Activated CD4-positive, alpha-beta memory T cell treated with anti-CD3 and anti-CD28 coated beads for 36 hours (primary cell): ENCODE measurements at regions of chr5 and their contacts with region 1.

Region 1: GRCh38 chr5:175657593-175658271 is at the start of gene HRH2:
- DNase-seq: peak; percentile 72
- H3K4me3 Mint-ChIP-seq: peak within 1 kb of the TSS; percentile 87
- H3K27ac Mint-ChIP-seq: peak within 1 kb of the TSS; percentile 75
- H3K4me1 Mint-ChIP-seq: peaks cover 77% of the 10 kb centered on the region
- H3K27me3 Mint-ChIP-seq: no peaks in the 10 kb centered on the region
- total RNA-seq, gene HRH2: 11.6 to 11.8 TPM

Region 2: DNA sequence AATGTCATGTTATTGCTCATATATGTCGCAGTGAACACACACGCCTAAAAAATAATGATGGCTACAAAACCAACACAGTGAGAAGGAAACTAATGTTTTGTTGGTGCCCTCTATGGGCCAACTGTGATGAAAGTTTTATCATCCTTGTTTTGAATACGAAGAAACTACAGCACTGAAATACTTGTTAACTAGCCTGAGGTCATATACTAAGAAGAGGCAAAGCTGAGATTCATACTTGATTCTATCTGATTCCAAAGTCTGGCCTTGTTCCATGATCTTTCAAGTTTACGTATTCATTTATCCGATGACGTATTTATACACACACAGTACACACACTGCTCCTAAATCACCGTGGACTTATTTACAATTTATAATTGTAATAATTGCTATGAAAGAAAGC is 197.6 kb before region 1 on chr5:
- CTCF ChIA-PET with region 1: no interaction called
- POLR2A ChIA-PET with region 1: no interaction called
- intact Hi-C with region 1: no loop called
- DNase-seq: no peak
- H3K4me3 Mint-ChIP-seq: no peak overlapping the region
- H3K27ac Mint-ChIP-seq: no peak overlapping the region
- H3K4me1 Mint-ChIP-seq: peaks cover 14% of the 10 kb centered on the region
- H3K27me3 Mint-ChIP-seq: peaks cover 3% of the 10 kb centered on the region

Region 3: DNA sequence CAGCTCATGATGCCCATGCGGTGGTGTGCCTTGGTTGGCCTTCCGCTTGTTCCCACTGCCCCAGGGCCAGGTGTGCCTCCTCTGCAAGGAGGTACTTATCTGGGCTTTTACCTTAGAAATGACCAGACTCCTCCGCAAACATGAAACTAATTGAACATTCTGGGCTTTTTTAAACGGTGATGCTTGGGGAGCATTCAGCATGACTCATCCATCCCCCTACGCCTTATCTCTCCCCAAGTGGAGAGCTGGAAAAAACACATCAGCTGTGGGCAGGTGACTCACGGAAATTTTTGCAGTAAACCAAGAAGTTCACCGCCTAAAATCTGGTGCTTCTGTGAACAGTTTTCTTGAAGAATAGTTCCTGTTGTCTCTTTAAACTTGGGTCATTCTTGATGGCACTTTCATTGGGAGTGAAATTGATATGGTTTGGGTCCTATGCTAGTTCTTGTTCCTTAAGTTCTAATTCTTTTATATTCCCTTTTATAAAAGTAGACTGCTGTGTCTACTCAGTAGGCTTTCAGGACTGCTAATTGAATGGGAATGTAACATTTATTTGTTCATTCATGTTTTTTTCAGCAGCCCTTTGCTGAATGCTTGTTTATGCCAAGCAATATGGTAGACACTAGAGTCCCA is 139.8 kb before region 1 on chr5:
- CTCF ChIA-PET with region 1: interaction called, 4 read pairs
- POLR2A ChIA-PET with region 1: interaction called, 5 read pairs
- intact Hi-C with region 1: loop called (anchors 1 kb)
- DNase-seq: peak; percentile 95
- H3K4me3 Mint-ChIP-seq: peak overlapping the region; percentile 53
- H3K27ac Mint-ChIP-seq: peak overlapping the region; percentile 100
- H3K4me1 Mint-ChIP-seq: peaks cover 92% of the 10 kb centered on the region
- H3K27me3 Mint-ChIP-seq: no peaks in the 10 kb centered on the region

Region 4: GRCh38 chr5:175609526-175609925 is 48.2 kb before region 1 on chr5:
- CTCF ChIA-PET with region 1: interaction called, 3 read pairs
- POLR2A ChIA-PET with region 1: no interaction called
- intact Hi-C with region 1: loop called (anchors 2 kb)
- DNase-seq: peak; percentile 60
- H3K4me3 Mint-ChIP-seq: no peak overlapping the region
- H3K27ac Mint-ChIP-seq: no peak overlapping the region
- H3K4me1 Mint-ChIP-seq: peaks cover 15% of the 10 kb centered on the region
- H3K27me3 Mint-ChIP-seq: peaks cover 7% of the 10 kb centered on the region

Region 5: DNA sequence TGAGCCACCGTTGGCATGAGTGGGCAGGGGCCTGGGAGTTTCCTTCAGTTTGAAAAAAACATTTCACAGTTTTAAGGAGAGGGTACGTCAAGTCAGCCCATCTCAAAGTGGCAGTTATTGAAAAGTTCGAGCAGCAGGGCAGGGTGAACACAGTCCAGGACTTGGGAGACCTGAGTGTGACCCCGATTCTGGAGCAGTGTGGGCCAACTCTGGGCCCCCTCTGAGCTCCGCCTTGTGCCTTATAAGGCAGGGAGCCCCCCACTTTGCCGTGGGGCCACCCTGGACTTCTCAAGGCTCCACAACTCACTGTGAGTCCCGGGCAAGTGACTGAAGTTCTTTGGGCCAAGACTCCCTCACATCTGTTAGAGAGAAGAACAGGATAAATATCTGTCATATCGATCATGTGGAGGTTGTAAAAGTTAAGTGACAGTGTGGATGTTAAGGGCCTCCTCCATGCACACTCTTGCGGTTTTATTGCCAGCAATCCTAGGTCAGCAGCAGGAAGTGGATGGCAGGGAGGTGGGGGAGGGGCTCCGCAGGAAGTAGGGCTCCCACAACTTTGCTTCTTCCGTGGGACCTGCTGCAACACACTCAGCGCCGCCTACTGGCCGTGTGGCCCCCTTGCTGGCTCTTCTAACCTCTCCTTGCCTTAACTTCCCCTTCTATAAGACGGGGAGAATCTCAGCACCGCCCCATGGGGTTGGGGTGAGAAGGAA is 38.6 kb after region 1 on chr5:
- CTCF ChIA-PET with region 1: interaction called, 9 read pairs
- POLR2A ChIA-PET with region 1: no interaction called
- intact Hi-C with region 1: loop called (anchors 1 kb)
- DNase-seq: peak; percentile 92
- H3K4me3 Mint-ChIP-seq: peak overlapping the region; percentile 60
- H3K27ac Mint-ChIP-seq: peak overlapping the region; percentile 90
- H3K4me1 Mint-ChIP-seq: peaks cover 16% of the 10 kb centered on the region
- H3K27me3 Mint-ChIP-seq: no peaks in the 10 kb centered on the region

Region 6: GRCh38 chr5:176388444-176389134 is 730.9 kb after region 1 on chr5 and contains the starts of genes HIGD2A and NOP16:
- CTCF ChIA-PET with region 1: no interaction called
- POLR2A ChIA-PET with region 1: no interaction called
- intact Hi-C with region 1: loop called (anchors 10 kb)
- DNase-seq: peak; percentile 100
- H3K4me3 Mint-ChIP-seq: peak within 1 kb of the TSS; percentile 99
- H3K27ac Mint-ChIP-seq: peak within 1 kb of the TSS; percentile 98
- H3K4me1 Mint-ChIP-seq: peaks cover 27% of the 10 kb centered on the region
- H3K27me3 Mint-ChIP-seq: no peaks in the 10 kb centered on the region
- total RNA-seq, gene HIGD2A: 112 to 119 TPM
- total RNA-seq, gene NOP16: 52.5 to 57.6 TPM